ENCODE measurements at regions of chr3 and their contacts with region 1.

Region 1: DNA sequence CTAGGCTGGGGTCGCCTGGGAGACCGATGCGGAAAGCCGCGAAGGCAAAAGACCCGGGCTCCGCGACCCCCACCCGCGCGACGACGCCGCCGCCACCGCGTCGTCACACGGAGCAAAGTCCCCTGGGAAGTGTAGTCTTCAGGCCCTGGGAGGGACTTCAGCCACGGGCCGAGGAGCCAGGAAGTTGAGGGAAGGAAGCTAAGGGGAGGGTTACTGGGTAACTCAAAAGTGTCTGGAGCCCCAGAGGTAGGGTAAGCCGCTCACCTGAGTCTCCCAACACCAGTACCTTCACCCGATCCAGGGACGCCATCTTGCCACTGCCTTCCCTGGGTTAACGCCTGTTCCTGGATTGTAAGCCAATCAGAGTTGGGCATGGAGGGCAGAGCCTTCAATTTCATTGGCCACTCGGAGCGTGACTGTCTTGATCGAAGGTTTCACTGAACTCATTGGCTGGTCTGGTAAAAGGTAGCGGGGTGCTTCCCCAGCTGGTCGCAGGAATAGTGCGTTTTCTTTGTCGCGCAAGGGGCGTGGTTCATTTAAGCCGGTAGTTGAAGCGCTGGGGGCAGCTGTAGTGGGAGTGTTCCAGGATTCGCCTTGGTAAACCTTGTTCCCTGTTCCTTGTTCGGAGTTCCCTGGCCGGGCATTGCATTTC is at the starts of genes GTF2E1 and RABL3:
- DNase-seq: peak; percentile 100
- H3K4me3 ChIP-seq: peak within 1 kb of the TSS; percentile 67 to 96 (median 81)
- H3K27ac ChIP-seq: peak within 1 kb of the TSS; percentile 93
- H3K4me1 ChIP-seq: peaks cover 29% of the 10 kb centered on the region
- H3K27me3 ChIP-seq: no peaks in the 10 kb centered on the region
- CTCF ChIP-seq: no peak
- POLR2A ChIP-seq: peak; percentile 73
- total RNA-seq, gene GTF2E1: 25.5 and 27.7 TPM in 2 replicates
- total RNA-seq, gene RABL3: 24.9 and 25.9 TPM in 2 replicates

Region 2: GRCh38 chr3:120596116-120596852 is 146.0 kb before region 1 on chr3 and contains the start of gene NDUFB4:
- CTCF ChIA-PET with region 1: no interaction called
- POLR2A ChIA-PET with region 1: interaction called, 6 read pairs
- dilution Hi-C with region 1: no loop called
- intact Hi-C with region 1: loop called (anchors 1 kb)
- DNase-seq: peak; percentile 99
- H3K4me3 ChIP-seq: peak within 1 kb of the TSS; percentile 50 to 88 (median 81)
- H3K27ac ChIP-seq: peak within 1 kb of the TSS; percentile 83
- H3K4me1 ChIP-seq: peaks cover 6% of the 10 kb centered on the region
- H3K27me3 ChIP-seq: no peaks in the 10 kb centered on the region
- CTCF ChIP-seq: no peak
- POLR2A ChIP-seq: peak; percentile 95
- total RNA-seq, gene NDUFB4: 140 TPM in 2 replicates

Region 3: GRCh38 chr3:120622870-120623731 is 119.2 kb before region 1 on chr3:
- CTCF ChIA-PET with region 1: no interaction called
- POLR2A ChIA-PET with region 1: no interaction called
- dilution Hi-C with region 1: no loop called
- intact Hi-C with region 1: loop called (anchors 5 kb)
- DNase-seq: peak; percentile 51
- H3K4me3 ChIP-seq: no peak overlapping the region
- H3K27ac ChIP-seq: no peak overlapping the region
- H3K4me1 ChIP-seq: peaks cover 8% of the 10 kb centered on the region
- H3K27me3 ChIP-seq: no peaks in the 10 kb centered on the region
- CTCF ChIP-seq: peak; percentile 22 to 28
- POLR2A ChIP-seq: no peak

Region 4: GRCh38 chr3:120678331-120678947 is 63.9 kb before region 1 on chr3:
- CTCF ChIA-PET with region 1: interaction called, 4 read pairs
- POLR2A ChIA-PET with region 1: interaction called, 4 read pairs
- dilution Hi-C with region 1: no loop called
- intact Hi-C with region 1: loop called (anchors 1 kb)
- DNase-seq: peak; percentile 95
- H3K4me3 ChIP-seq: peak overlapping the region in 1 of 3 experiments; percentile 36
- H3K27ac ChIP-seq: peak overlapping the region; percentile 63
- H3K4me1 ChIP-seq: peaks cover 21% of the 10 kb centered on the region
- H3K27me3 ChIP-seq: no peaks in the 10 kb centered on the region
- CTCF ChIP-seq: no peak
- POLR2A ChIP-seq: peak; percentile 60

Region 5: GRCh38 chr3:120693439-120694186 is 48.7 kb before region 1 on chr3:
- CTCF ChIA-PET with region 1: no interaction called
- POLR2A ChIA-PET with region 1: no interaction called
- dilution Hi-C with region 1: no loop called
- intact Hi-C with region 1: loop called (anchors 1 kb)
- DNase-seq: peak; percentile 79
- H3K4me3 ChIP-seq: no peak overlapping the region
- H3K27ac ChIP-seq: peak overlapping the region; percentile 68
- H3K4me1 ChIP-seq: peaks cover 12% of the 10 kb centered on the region
- H3K27me3 ChIP-seq: no peaks in the 10 kb centered on the region
- CTCF ChIP-seq: no peak
- POLR2A ChIP-seq: no peak

Region 6: DNA sequence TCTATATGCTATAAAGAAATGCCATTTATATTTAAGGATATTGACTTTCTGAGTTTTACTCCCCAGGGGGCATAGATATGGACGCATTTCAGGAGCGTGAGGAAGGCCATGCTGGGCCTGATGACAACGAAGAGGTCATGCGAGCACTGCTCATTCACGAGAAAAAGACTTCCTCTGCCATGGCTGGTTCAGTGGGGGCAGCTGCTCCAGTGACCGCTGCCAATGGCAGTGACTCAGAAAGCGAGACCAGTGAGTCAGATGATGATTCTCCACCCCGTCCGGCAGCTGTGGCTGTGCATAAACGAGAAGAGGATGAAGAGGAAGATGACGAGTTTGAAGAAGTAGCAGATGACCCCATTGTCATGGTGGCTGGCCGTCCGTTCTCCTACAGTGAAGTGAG is 38.7 kb after region 1 on chr3:
- CTCF ChIA-PET with region 1: no interaction called
- POLR2A ChIA-PET with region 1: interaction called, 4 read pairs
- dilution Hi-C with region 1: no loop called
- intact Hi-C with region 1: loop called (anchors 1 kb)
- DNase-seq: peak; percentile 90
- H3K4me3 ChIP-seq: no peak overlapping the region
- H3K27ac ChIP-seq: peak overlapping the region; percentile 78
- H3K4me1 ChIP-seq: peaks cover 22% of the 10 kb centered on the region
- H3K27me3 ChIP-seq: no peaks in the 10 kb centered on the region
- CTCF ChIP-seq: no peak
- POLR2A ChIP-seq: no peak

Region 7: DNA sequence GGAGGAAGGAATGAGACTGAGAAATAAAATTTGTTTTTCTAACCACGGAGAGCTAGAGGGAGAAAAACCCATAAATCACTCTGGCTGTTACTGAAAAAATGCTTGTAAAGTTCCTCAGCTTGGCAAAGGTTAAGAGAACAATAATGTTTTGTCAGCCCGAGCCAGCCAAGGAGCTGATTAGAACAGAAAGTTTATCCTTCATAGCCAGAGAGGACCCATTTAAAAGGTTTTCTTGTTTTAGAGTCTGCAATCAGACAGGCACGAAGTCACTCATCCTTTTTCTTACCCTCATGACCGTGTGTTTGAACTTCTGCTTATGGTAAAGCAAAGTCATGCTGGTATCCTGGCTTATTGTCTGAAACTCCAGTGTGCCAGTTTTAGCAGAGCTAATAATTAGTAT is 152.0 kb after region 1 on chr3:
- CTCF ChIA-PET with region 1: no interaction called
- POLR2A ChIA-PET with region 1: no interaction called
- dilution Hi-C with region 1: no loop called
- intact Hi-C with region 1: no loop called
- DNase-seq: peak; percentile 48
- H3K4me3 ChIP-seq: no peak overlapping the region
- H3K27ac ChIP-seq: no peak overlapping the region
- H3K4me1 ChIP-seq: no peaks in the 10 kb centered on the region
- H3K27me3 ChIP-seq: peaks cover 2 to 8% of the 10 kb centered on the region in 2 experiments
- CTCF ChIP-seq: no peak
- POLR2A ChIP-seq: no peak

Region 8: DNA sequence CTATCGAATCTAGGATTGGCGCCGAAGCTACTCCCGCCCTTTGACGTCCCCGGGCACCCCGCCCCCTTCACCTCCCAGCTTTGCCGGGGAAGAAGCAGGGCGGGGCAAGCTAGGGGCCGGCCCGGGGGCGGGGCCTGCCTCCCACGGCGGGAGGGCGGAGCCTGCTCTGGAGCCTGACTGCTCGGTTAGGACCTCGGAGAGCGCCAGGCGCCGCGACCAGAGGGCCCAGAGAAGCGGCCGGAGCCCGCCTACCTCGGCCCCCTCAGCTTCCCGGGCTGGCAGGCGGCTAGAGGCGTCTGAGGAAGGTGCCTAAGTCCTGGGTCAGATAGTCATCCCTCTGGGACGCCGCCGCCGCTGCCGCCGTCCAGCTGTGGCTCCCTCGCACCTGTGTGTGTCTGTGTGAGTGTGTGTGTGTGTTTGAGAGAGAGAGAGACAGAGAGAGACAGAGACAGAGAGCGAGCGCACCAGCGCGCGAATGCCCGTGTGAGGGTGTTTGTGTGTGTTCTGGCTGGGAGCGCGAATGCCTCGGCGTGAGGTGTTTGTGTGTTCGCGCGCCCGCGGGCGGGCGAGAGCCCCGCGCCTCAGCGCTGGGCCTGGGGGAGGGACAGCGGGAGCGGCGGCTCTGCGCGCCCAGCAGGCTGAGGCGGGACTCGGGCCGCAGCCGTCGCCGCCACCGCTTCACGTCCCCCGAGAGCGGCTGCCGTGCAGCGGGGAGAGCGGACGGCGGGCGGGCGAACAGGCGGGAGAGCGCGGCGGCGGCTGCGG is 165.9 kb after region 1 on chr3 and contains the start of gene STXBP5L:
- CTCF ChIA-PET with region 1: no interaction called
- POLR2A ChIA-PET with region 1: no interaction called
- dilution Hi-C with region 1: no loop called
- intact Hi-C with region 1: loop called (anchors 2 kb)
- DNase-seq: peak; percentile 83
- H3K4me3 ChIP-seq: peak within 1 kb of the TSS; percentile 5 to 60 (median 26)
- H3K27ac ChIP-seq: no peak within 1 kb of the TSS
- H3K4me1 ChIP-seq: peaks cover 9% of the 10 kb centered on the region
- H3K27me3 ChIP-seq: peaks cover 15 to 33% of the 10 kb centered on the region in 2 experiments
- CTCF ChIP-seq: no peak
- POLR2A ChIP-seq: no peak
- total RNA-seq, gene STXBP5L: not detected in 2 replicates